ENCODE measurements at regions of chr1 and their contacts with region 1.

Region 1: GRCh38 chr1:228405987-228406265 is 709 bp downstream of the TRIM11 start:
- DNase-seq: no peak
- H3K4me3 ChIP-seq: peak overlapping the region; percentile 91
- H3K27ac ChIP-seq: no peak overlapping the region
- H3K27me3 ChIP-seq: no peaks in the 10 kb centered on the region
- CTCF ChIP-seq: no peak

Region 2: DNA sequence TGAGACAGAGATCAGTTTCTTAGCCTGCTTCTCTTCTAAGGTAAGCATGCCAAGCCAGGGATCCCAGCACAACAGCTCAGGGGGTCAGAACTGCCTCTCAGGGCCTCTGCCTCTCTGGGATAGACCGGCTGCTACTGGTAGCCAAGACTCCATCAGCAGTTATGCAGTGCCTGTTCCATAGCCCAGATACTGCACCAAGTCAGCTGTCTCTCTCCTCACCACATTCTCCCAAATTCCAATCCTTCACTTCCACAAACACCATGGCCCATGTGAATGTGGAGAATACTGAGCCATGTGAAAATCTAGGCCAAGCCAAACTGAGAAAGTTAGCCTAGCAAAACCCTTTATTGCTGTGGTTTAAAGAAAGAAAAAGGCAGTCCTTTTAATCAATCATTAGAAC is 1125.1 kb before region 1 on chr1:
- CTCF ChIA-PET with region 1: no interaction called
- POLR2A ChIA-PET with region 1: interaction called, 11 read pairs
- DNase-seq: no peak
- H3K4me3 ChIP-seq: no peak overlapping the region
- H3K27ac ChIP-seq: no peak overlapping the region
- H3K27me3 ChIP-seq: no peaks in the 10 kb centered on the region
- CTCF ChIP-seq: no peak

Region 3: GRCh38 chr1:228139944-228140656 is 265.8 kb before region 1 on chr1 and contains the start of gene GUK1:
- CTCF ChIA-PET with region 1: no interaction called
- POLR2A ChIA-PET with region 1: interaction called, 18 read pairs
- DNase-seq: peak; percentile 97
- H3K4me3 ChIP-seq: peak within 1 kb of the TSS; percentile 90
- H3K27ac ChIP-seq: peak within 1 kb of the TSS; percentile 82
- H3K27me3 ChIP-seq: peaks cover 18% of the 10 kb centered on the region
- CTCF ChIP-seq: peak; percentile 23; the same call in 1 of the 2 replicates
- polyA plus RNA-seq, gene GUK1: 177 and 230 TPM in 2 replicates

Region 4: DNA sequence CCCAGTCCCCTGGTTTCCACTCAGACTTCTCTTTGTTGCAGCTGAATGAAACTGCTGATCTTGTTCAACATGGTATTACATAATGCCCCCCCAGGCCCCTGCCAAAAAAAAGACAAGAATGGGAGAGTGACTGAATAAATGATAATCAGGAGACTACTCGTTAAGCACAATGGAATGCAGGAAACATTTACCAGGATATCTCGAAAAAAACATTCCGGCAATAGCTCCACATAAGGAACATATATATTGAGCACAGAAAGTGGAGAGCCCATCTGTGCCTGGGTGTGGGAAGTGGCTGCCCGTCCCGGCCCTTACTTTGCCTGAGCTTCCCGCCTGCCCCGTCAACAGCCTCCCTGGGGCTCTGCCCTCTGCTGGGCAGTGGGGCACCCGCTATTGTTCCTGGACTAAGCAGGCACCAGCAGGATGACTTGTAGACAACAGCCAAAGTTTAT is 12.7 kb before region 1 on chr1:
- CTCF ChIA-PET with region 1: interaction called, 11 read pairs
- POLR2A ChIA-PET with region 1: interaction called, 19 read pairs
- DNase-seq: peak; percentile 32
- H3K4me3 ChIP-seq: no peak overlapping the region
- H3K27ac ChIP-seq: peak overlapping the region; percentile 74
- H3K27me3 ChIP-seq: no peaks in the 10 kb centered on the region
- CTCF ChIP-seq: peak; percentile 61

Region 5: GRCh38 chr1:228445843-228446650 is 40.1 kb after region 1 on chr1:
- CTCF ChIA-PET with region 1: interaction called, 11 read pairs
- POLR2A ChIA-PET with region 1: no interaction called
- DNase-seq: no peak
- H3K4me3 ChIP-seq: peak overlapping the region; percentile 55
- H3K27ac ChIP-seq: no peak overlapping the region
- H3K27me3 ChIP-seq: peaks cover 17% of the 10 kb centered on the region
- CTCF ChIP-seq: no peak

Region 6: DNA sequence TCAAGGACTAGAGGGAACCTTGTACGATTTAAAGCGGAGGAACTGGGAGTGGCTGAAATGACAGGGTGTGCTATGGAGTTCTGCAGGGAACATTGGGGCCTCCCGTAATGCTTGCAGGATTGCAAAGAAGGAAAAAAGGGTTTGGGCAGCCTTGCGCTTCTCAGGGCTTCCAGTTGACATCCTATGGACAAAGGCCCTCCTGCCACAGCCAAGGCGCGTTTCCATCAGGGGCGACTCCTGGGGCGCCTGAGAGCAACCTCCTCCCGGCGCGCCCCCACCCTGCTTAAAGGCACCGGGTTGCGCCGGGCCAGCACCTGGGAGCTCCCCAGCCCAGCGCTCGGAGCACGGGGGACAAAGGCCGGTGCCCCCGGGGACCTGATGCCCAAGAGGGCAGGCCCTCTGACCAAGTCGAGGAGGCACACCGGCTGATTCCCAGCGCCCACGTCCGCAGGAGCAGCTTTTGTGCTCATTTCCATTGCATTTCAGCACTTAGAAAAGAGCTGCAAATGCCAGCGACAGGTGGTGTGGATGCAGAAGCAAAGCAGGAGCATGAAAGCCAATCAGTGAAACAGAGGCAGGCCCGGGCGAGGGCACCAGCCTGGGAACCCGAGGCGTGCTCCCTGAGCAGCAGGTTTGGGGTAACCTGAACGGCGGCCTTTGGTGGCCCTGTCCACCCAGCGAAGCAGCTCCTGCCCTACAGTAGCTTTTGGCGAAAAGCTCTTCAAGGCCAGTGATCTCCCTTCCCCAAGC is 63.7 kb after region 1 on chr1:
- CTCF ChIA-PET with region 1: no interaction called
- POLR2A ChIA-PET with region 1: interaction called, 16 read pairs
- DNase-seq: no peak
- H3K4me3 ChIP-seq: no peak overlapping the region
- H3K27ac ChIP-seq: no peak overlapping the region
- H3K27me3 ChIP-seq: peaks cover 40% of the 10 kb centered on the region
- CTCF ChIP-seq: no peak